Naive thymus-derived CD8-positive, alpha-beta T cell (primary cell): ENCODE measurements at regions of chr17 and their contacts with region 1.

Region 1: DNA sequence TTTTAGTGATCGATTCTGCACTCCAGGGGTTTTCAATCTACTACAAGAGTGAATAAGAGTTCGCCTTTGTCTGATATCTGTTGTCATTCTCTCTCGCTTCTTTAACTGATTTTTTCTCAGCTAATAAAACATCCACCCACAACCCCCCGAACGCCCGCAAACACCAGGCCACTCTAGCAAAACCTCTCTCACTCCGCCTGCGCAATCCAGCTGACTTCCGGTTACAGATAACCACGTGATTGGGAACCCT is 338 bp upstream of the RPL19 start:
- DNase-seq: peak in 9 of 10 donors; percentile 67 to 95 (median 86)
- ATAC-seq: peak; percentile 62 to 71
- H3K4me3 Mint-ChIP-seq: peak overlapping the region; percentile 86 to 99 (median 96)
- H3K27ac Mint-ChIP-seq: peak overlapping the region; percentile 98 to 100 (median 99)
- H3K4me1 Mint-ChIP-seq: peaks cover 23 to 74% (median 62%) of the 10 kb centered on the region in 4 donors
- H3K27me3 Mint-ChIP-seq: no peaks in the 10 kb centered on the region

Region 2: GRCh38 chr17:39144416-39144840 is 55.3 kb before region 1 on chr17:
- POLR2A ChIA-PET with region 1: no interaction called
- DNase-seq: no peak
- ATAC-seq: no peak
- H3K4me3 Mint-ChIP-seq: no peak overlapping the region
- H3K27ac Mint-ChIP-seq: peak overlapping the region in 6 of 10 donors; percentile 1 to 84 (median 41)
- H3K4me1 Mint-ChIP-seq: peaks cover 11 to 39% (median 30%) of the 10 kb centered on the region in 4 donors
- H3K27me3 Mint-ChIP-seq: no peaks in the 10 kb centered on the region

Region 3: GRCh38 chr17:39164675-39165143 is 35.0 kb before region 1 on chr17:
- POLR2A ChIA-PET with region 1: interaction called, 23 read pairs
- DNase-seq: peak; percentile 56 to 87 (median 72)
- ATAC-seq: peak; percentile 92 to 95
- H3K4me3 Mint-ChIP-seq: peak overlapping the region; percentile 87 to 97 (median 95)
- H3K27ac Mint-ChIP-seq: peak overlapping the region in 9 of 10 donors; percentile 17 to 82 (median 63)
- H3K4me1 Mint-ChIP-seq: peaks cover 12 to 34% (median 23%) of the 10 kb centered on the region in 4 donors
- H3K27me3 Mint-ChIP-seq: peaks cover 3 to 17% (median 7%) of the 10 kb centered on the region in 5 donors

Region 4: GRCh38 chr17:39235555-39236449 is 36.1 kb after region 1 on chr17:
- POLR2A ChIA-PET with region 1: interaction called, 134 read pairs
- DNase-seq: peak in 5 of 10 donors; percentile 36 to 64 (median 62)
- ATAC-seq: peak; percentile 13 to 43
- H3K4me3 Mint-ChIP-seq: peak overlapping the region in 3 of 10 donors; percentile 5 to 59 (median 55)
- H3K27ac Mint-ChIP-seq: peak overlapping the region; percentile 5 to 94 (median 84)
- H3K4me1 Mint-ChIP-seq: peaks cover 29 to 53% (median 44%) of the 10 kb centered on the region in 4 donors
- H3K27me3 Mint-ChIP-seq: peaks cover 0 to 3% (median 0%) of the 10 kb centered on the region in 5 donors

Region 5: DNA sequence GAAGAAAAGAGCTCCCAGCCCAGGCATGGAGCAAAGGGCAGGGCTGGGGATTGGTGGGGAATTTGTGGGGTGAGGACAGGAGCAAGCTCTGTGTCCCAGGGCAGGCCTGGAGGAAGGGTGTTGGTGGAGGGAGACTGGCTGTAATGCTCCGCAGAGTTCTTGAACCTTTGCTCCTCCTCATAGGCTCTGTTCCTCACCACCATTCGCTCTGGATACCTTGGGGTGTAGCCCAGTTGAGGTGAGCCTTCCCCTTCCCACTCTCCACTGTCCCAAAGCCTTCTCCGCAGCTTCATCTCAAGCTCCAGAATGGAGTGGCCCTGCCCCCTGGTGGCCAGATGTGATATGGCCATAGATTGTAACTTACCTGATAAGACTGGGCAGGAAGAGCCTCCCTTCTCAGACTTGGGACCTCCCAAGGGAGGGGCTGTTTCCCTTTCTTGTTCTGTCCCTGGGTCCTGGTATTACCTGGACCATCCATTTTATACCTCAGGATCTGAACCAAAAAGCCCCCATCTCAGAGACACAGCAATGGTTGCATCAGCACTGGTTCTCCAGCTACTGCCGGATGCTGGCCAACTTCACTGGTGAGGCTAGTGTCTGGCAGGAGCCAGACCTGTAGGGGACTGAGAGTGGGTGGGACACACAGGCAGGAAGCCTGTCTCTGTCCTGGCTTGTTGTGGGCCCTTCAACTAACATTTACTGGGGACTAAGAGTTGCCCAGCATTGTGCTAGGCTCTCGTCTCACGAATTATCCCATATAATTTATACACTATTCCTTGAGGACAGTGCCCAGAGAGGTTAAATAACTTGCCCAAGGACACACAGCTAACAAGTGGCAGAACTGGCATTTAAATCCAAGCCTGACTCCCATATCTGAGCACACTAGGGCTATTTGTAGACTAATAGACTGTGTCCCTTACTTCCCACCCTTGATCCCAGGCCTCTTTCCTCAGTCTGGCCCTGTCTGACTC is 45.1 kb after region 1 on chr17:
- POLR2A ChIA-PET with region 1: interaction called, 134 read pairs
- DNase-seq: peak; percentile 70 to 92 (median 84)
- ATAC-seq: peak; percentile 89 to 92
- H3K4me3 Mint-ChIP-seq: peak overlapping the region in 8 of 10 donors; percentile 27 to 65 (median 53)
- H3K27ac Mint-ChIP-seq: peak overlapping the region in 6 of 10 donors; percentile 9 to 90 (median 68)
- H3K4me1 Mint-ChIP-seq: peaks cover 6 to 18% (median 15%) of the 10 kb centered on the region in 4 donors
- H3K27me3 Mint-ChIP-seq: no peaks in the 10 kb centered on the region

Region 6: DNA sequence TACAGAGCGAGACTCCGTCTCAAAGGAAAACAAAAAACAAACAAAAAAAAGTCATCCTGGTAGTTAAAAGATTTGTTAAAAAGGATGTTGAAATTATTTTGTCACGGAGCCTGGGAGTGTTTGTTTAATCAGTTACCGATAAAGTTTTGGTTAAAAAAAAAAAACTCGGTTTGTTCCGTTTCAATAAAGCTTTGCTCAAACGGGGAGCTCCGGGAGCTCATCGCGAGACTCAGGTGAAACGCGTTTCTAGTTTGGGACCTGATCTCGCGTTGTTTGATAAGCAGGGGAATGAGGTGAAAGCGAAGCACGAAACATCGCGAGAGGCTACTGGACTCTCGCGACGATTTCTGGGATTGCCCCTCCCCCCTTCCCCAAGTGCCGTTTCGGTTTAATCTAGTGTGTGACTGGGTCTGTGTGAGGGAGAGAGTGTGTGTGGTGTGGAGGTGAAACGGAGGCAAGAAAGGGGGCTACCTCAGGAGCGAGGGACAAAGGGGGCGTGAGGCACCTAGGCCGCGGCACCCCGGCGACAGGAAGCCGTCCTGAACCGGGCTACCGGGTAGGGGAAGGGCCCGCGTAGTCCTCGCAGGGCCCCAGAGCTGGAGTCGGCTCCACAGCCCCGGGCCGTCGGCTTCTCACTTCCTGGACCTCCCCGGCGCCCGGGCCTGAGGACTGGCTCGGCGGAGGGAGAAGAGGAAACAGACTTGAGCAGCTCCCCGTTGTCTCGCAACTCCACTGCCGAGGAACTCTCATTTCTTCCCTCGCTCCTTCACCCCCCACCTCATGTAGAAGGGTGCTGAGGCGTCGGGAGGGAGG is 261.6 kb after region 1 on chr17 and contains the start of gene CDK12:
- POLR2A ChIA-PET with region 1: interaction called, 14 read pairs
- DNase-seq: peak; percentile 80 to 99 (median 96)
- ATAC-seq: peak; percentile 83 to 85
- H3K4me3 Mint-ChIP-seq: peak within 1 kb of the TSS; percentile 88 to 99 (median 96)
- H3K27ac Mint-ChIP-seq: peak within 1 kb of the TSS; percentile 94 to 100 (median 96)
- H3K4me1 Mint-ChIP-seq: peaks cover 15 to 48% (median 39%) of the 10 kb centered on the region in 4 donors
- H3K27me3 Mint-ChIP-seq: peaks cover 0 to 3% (median 0%) of the 10 kb centered on the region in 5 donors
- polyA plus RNA-seq, gene CDK12: 3.2 to 7.1 (median 5.5) TPM